ENCODE measurements at regions of chr15 and their contacts with region 1.

Region 1: DNA sequence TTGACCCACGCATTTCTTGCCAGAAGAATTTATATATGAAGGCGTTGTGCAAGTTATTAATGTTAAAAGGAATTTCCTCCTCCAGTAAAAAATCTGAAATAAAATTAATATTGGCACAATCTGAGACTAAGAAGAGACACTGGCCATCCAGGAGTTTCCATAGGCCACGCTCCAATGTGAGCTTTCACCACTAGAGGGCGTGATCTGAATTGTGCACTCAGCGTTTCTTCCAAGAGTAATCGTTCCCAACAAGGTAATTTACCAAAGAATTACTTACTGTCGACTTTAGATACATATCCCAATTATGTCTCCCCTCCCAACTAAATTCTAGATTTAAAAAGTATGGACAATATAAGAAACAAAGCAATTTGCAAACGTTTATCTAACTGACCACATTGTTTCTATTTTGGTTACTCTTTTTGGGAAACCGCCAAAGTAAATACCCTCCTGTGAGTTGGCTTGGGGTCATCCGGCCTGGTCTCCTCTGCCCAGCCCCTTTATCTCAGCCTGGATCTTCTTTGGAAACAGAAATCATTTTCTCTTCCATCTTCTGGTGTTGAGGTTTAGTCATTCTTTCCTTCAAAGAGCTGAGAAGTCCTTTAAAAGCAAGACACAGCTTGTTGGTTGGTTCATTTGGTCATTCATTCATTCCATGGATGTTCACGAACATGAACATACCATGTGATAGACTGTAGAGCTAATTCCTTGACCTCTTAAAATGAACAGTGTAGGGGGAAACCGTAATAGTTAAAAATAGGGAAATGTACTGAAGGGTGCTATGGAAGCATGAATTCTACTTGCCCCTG is 26.2 kb downstream of the POLR2M start:
- DNase-seq: no peak
- ATAC-seq: peak; percentile 82
- H3K4me3 ChIP-seq: no peak overlapping the region
- H3K27ac ChIP-seq: no peak overlapping the region
- H3K4me1 ChIP-seq: no peaks in the 10 kb centered on the region
- H3K27me3 ChIP-seq: no peaks in the 10 kb centered on the region
- CTCF ChIP-seq: peak; percentile 67 to 95 (median 85)
- EP300 ChIP-seq: no peak
- POLR2A ChIP-seq: no peak
- RAD21 ChIP-seq: peak; percentile 39; the same call in 1 of the 2 replicates

Region 2: DNA sequence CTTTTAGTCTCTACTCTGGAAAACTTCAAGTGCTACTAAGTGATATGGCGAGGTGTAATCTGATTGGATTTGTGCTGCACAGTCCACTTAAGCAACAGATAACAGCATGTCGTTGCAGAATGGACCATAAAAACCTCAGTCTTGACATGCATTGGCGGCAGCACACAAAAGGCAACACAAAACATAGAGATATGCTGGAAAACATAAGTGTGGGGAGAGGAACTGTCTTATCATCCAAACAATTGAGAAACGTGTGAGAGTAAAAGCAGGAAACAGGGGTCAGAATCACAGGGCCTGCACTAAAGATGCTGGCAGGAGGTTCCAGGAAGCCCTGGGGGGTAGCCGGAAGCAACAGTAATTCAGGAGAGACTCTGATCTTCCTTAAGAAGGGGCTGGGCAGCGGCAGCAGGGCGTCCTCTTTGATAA is 274.4 kb before region 1 on chr15:
- CTCF ChIA-PET with region 1: no interaction called
- POLR2A ChIA-PET with region 1: no interaction called
- RAD21 ChIA-PET with region 1: no interaction called
- SMC1A ChIA-PET with region 1: no interaction called
- in situ Hi-C with region 1: no loop called
- intact Hi-C with region 1: no loop called
- DNase-seq: no peak
- ATAC-seq: no peak
- H3K4me3 ChIP-seq: no peak overlapping the region
- H3K27ac ChIP-seq: no peak overlapping the region
- H3K4me1 ChIP-seq: no peaks in the 10 kb centered on the region
- H3K27me3 ChIP-seq: no peaks in the 10 kb centered on the region
- CTCF ChIP-seq: no peak
- EP300 ChIP-seq: no peak
- POLR2A ChIP-seq: no peak
- RAD21 ChIP-seq: no peak

Region 3: DNA sequence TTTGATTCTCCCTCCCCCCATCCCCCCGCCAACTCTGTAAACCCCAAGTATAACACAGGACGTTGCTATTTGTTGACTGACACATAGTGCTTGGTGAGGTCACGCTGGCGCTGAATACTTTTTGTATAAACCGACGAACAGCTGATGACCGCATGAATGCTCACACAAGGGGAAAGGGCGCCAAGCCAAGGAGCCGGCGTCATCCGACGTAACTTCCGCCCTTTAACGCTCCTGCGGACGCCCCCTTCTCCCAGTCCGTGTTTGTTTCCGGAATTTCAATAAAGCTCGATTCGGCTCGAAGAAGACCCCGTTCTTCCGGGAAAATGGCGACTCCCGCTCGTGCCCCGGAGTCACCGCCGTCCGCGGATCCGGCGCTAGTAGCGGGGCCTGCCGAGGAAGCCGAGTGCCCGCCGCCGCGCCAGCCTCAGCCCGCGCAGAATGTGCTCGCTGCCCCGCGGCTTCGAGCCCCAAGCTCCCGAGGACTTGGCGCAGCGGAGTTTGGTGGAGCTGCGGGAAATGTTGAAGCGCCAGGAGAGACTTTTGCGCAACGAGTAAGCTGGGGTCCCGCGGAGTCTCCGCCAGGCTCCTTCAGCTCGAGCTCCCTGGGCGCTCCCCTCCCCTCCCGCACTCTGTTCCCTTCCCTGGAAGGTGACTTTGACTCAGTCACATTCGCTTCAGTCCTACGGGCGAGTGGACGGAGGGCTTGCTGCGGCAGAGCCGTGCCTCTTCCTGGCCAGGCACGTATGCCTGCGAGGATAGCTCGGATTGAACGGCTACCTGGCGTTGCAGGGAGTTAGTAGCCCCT is 26.1 kb before region 1 on chr15 and contains the start of gene POLR2M:
- CTCF ChIA-PET with region 1: interaction called, 21 read pairs
- POLR2A ChIA-PET with region 1: no interaction called
- RAD21 ChIA-PET with region 1: no interaction called
- SMC1A ChIA-PET with region 1: interaction called, 3 read pairs
- in situ Hi-C with region 1: no loop called
- intact Hi-C with region 1: no loop called
- DNase-seq: peak; percentile 78
- ATAC-seq: peak; percentile 92
- H3K4me3 ChIP-seq: peak within 1 kb of the TSS; percentile 96
- H3K27ac ChIP-seq: peak within 1 kb of the TSS; percentile 92
- H3K4me1 ChIP-seq: peaks cover 3% of the 10 kb centered on the region
- H3K27me3 ChIP-seq: no peaks in the 10 kb centered on the region
- CTCF ChIP-seq: no peak
- EP300 ChIP-seq: peak in 1 of 2 experiments; percentile 49; a peak in 1 of 4 replicates
- POLR2A ChIP-seq: peak; percentile 88
- RAD21 ChIP-seq: no peak
- polyA plus RNA-seq, gene POLR2M: 5.8 to 8.3 TPM

Region 4: GRCh38 chr15:57720867-57721266 is 11.9 kb before region 1 on chr15:
- CTCF ChIA-PET with region 1: interaction called, 25 read pairs
- POLR2A ChIA-PET with region 1: no interaction called
- RAD21 ChIA-PET with region 1: no interaction called
- SMC1A ChIA-PET with region 1: interaction called, 4 read pairs
- in situ Hi-C with region 1: no loop called
- intact Hi-C with region 1: no loop called
- DNase-seq: no peak
- ATAC-seq: no peak
- H3K4me3 ChIP-seq: no peak overlapping the region
- H3K27ac ChIP-seq: no peak overlapping the region
- H3K4me1 ChIP-seq: no peaks in the 10 kb centered on the region
- H3K27me3 ChIP-seq: no peaks in the 10 kb centered on the region
- CTCF ChIP-seq: no peak
- EP300 ChIP-seq: no peak
- POLR2A ChIP-seq: no peak
- RAD21 ChIP-seq: no peak

Region 5: DNA sequence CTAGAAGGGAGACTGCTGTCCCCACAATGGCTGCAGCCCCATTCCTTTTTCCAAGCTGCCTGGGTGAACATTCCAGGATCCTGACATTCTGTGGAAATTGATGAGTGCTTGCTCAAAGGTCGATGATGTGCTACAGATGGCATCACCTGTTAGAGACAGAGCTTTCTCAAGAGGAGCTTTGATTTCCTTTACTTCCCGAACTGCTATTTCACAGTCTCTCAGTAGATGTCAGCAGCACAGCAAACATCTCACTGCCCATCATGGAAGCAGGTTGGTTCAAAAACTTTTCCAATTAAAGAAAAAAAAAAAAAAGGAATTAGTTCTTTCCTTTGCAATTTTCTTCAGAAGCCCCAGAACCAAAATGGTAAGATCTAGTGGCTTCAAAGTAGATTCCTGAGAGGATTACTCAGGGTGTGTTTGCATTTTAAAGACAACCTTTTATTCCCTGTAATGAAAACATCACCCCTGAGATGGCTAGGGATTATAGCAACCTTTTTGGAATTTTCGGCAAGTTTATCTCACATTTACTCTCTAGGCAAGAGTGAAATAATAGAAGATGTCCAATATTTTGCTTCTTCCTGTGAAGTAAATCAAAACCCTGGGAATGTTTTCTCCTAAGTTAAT is 18.6 kb after region 1 on chr15:
- CTCF ChIA-PET with region 1: interaction called, 74 read pairs
- POLR2A ChIA-PET with region 1: no interaction called
- RAD21 ChIA-PET with region 1: no interaction called
- SMC1A ChIA-PET with region 1: interaction called, 6 read pairs
- in situ Hi-C with region 1: no loop called
- intact Hi-C with region 1: no loop called
- DNase-seq: no peak
- ATAC-seq: no peak
- H3K4me3 ChIP-seq: no peak overlapping the region
- H3K27ac ChIP-seq: no peak overlapping the region
- H3K4me1 ChIP-seq: no peaks in the 10 kb centered on the region
- H3K27me3 ChIP-seq: no peaks in the 10 kb centered on the region
- CTCF ChIP-seq: peak; percentile 35 to 47 (median 45); a peak in 5 of 6 replicates
- EP300 ChIP-seq: no peak
- POLR2A ChIP-seq: no peak
- RAD21 ChIP-seq: peak; percentile 62

Measured in GM12878 (cell line).